Sciatic nerve (tissue), 2 donors: ENCODE measurements at regions of chr12 and their contacts with region 1.

Region 1: DNA sequence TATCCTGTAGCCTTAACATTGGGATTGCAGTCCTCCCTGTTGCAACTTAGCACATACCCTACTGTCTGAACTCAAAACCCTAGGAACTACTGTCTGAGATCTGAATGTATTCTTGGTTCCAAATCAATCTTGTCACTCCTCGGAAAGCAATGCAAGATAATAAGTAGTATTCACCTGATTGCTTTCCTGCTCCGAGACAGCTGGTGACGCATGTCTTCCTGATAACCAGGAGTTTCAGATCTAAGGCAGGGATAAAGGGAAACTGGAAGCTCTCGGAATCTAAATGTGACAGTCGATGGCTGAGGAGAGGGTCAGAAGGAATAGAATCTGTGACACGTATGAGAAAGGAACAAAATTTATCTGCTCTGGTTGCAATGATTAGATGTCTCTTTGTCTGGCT is 67.6 kb downstream of the RMST start:
- DNase-seq: no peak
- ATAC-seq: no peak

Region 2: GRCh38 chr12:97570512-97570911 is 40.3 kb after region 1 on chr12:
- intact Hi-C with region 1: loop called (anchors 2 kb)
- DNase-seq: no peak
- ATAC-seq: no peak